Transverse colon (tissue), 4 donors: ENCODE measurements at regions of chr16 and their contacts with region 1.

Region 1: DNA sequence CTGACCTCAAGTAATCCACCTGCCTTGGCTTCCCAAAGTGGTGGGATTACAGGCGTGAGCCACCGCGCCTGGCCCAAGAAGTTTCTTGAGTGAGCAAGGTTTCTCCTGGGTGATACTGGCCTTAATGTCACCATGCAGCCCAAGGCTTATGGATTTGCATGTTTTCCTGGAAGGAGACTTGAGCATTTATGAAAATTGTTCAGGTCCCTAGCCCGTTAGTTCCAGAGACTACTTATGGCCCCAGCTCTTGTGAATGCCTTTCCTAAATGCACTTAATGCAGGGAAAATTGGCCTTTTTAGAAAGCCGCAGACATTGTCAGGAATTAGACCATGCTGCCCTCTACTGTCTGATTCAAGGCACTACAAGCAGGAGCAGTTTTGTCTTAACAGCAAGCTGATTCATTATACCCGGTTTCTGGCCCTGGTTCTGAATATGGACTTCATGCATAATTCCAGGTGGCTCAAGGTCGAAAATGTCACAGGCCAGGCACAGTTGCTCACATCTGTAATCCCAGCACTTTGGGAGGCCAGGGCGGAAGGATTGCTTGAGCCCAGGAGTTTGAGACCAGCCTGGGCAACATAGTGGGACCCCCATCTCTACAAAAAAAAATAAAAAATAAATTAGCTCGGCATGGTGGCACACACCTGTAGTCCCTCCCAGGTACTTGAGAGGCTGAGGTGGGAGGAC is 91.3 kb downstream of the SNX29 start:
- DNase-seq: peak; percentile 62
- H3K4me3 ChIP-seq: no peak overlapping the region
- H3K27ac ChIP-seq: no peak overlapping the region
- H3K4me1 ChIP-seq: peaks cover 0 to 2% (median 0%) of the 10 kb centered on the region in 4 donors
- H3K27me3 ChIP-seq: no peaks in the 10 kb centered on the region
- CTCF ChIP-seq: peak; percentile 89 to 95 (median 92)
- EP300 ChIP-seq: no peak
- POLR2A ChIP-seq: no peak

Region 2: DNA sequence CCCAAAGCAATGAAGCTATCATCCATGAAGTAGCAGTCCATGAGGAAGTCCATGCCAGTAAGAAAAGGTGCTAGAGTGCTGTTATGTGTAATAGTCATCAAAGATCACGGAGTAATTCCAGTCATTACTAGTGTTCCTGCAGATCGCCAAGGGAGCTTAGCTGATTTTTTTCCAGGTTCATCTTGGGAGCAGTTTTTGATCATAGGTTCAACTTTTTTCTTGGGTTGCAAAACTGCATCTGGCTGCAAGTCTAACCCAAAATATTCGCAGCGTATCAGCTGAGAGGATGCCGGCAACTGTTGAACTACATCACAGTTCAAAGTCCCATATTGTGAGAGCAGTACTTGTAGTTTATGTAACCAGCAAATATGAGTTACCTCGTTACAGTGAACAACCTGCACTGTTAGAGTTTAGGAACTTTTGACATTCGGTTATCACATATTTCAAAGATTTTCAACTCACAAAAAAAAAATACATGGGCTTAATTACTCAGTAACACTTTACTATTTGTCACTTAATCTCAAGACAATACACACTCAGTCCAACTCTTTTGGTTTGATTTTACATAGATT is 198.1 kb before region 1 on chr16:
- in situ Hi-C with region 1: no loop called
- intact Hi-C with region 1: loop called (anchors 10 kb)
- DNase-seq: no peak
- H3K4me3 ChIP-seq: no peak overlapping the region
- H3K27ac ChIP-seq: no peak overlapping the region
- H3K4me1 ChIP-seq: peaks cover 0 to 9% (median 3%) of the 10 kb centered on the region in 4 donors
- H3K27me3 ChIP-seq: no peaks in the 10 kb centered on the region
- CTCF ChIP-seq: no peak
- EP300 ChIP-seq: no peak
- POLR2A ChIP-seq: no peak

Region 3: DNA sequence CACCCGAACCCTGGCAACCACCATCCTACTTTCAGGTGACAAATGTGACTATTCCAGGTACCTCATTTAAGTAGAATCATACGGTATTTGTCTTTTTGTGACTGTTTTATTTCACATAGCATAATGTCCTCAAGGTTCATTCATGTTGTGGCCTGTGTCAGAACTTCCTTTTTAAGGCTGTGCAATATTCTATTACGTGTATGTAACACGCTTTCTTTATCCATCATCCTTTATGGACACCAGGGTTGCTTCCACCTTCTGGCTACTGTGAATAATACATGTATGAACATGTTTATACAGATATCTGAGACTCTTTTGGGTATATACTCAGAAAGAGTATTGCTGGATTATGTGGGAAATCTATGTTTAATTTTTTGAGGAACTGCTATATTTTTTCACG is 187.9 kb before region 1 on chr16:
- in situ Hi-C with region 1: loop called in 1 of 4 experiments (anchors 10 kb)
- intact Hi-C with region 1: no loop called
- DNase-seq: no peak
- H3K4me3 ChIP-seq: no peak overlapping the region
- H3K27ac ChIP-seq: no peak overlapping the region
- H3K4me1 ChIP-seq: no peaks in the 10 kb centered on the region
- H3K27me3 ChIP-seq: no peaks in the 10 kb centered on the region
- CTCF ChIP-seq: no peak
- EP300 ChIP-seq: no peak
- POLR2A ChIP-seq: no peak

Region 4: DNA sequence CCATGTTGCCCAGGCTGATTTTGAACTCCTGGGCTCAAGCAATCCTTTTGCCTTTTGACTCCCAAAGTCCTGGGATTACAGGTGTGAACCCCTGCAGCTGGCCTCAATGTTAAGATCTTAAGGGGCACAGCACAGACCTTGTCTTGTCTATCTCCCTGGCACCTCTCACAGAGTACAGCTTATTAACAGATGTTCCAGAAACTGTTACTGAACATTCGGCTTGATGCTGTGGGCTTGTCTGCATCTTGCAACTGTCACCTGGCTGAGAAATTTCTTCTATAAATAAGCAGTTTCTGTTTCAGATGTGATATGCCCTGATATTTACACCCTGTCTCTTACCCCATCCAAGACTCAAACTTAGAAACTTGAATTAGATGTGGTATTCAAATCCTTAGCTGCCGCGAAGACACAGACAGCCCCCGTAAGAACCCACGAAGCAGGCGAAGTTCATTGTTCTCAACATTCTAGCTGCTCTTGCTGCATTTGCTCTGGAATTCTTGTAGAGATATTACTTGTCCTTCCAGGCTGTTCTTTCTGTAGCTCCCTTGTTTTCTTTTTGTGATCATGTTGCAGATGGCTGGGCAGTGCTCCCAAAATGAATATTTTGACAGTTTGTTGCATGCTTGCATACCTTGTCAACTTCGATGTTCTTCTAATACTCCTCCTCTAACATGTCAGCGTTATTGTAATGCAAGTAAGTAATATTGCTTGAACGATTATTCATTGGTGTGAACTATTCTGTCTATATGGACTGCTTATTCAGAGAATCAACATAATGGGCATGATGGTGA is 102.9 kb before region 1 on chr16 and contains the start of gene TNFRSF17:
- in situ Hi-C with region 1: loop called in 2 of 4 experiments (anchors 25 kb)
- intact Hi-C with region 1: no loop called
- DNase-seq: peak; percentile 13
- H3K4me3 ChIP-seq: no peak within 1 kb of the TSS
- H3K27ac ChIP-seq: peak within 1 kb of the TSS in 2 of 4 donors; percentile 35 to 53
- H3K4me1 ChIP-seq: no peaks in the 10 kb centered on the region
- H3K27me3 ChIP-seq: no peaks in the 10 kb centered on the region
- CTCF ChIP-seq: no peak
- EP300 ChIP-seq: no peak
- POLR2A ChIP-seq: no peak
- total RNA-seq, gene TNFRSF17: 1.2 to 6.0 TPM in 2 of 4 donors, not detected in the others